ENCODE measurements at regions of chrX and their contacts with region 1.

Region 1: GRCh38 chrX:71622576-71623450 is 4.5 kb upstream of the CXCR3 start:
- DNase-seq: peak; percentile 67
- H3K4me3 ChIP-seq: no peak overlapping the region
- H3K27ac ChIP-seq: peak overlapping the region; percentile 75
- H3K4me1 ChIP-seq: peaks cover 11% of the 10 kb centered on the region
- H3K27me3 ChIP-seq: no peaks in the 10 kb centered on the region
- CTCF ChIP-seq: peak; percentile 15 to 36
- POLR2A ChIP-seq: no peak

Region 2: GRCh38 chrX:71637848-71638247 is 15.0 kb after region 1 on chrX:
- CTCF ChIA-PET with region 1: interaction called, 7 read pairs
- POLR2A ChIA-PET with region 1: no interaction called
- dilution Hi-C with region 1: no loop called
- intact Hi-C with region 1: loop called (anchors 1 kb)
- DNase-seq: peak; percentile 72
- H3K4me3 ChIP-seq: no peak overlapping the region
- H3K27ac ChIP-seq: peak overlapping the region; percentile 39
- H3K4me1 ChIP-seq: peaks cover 24% of the 10 kb centered on the region
- H3K27me3 ChIP-seq: no peaks in the 10 kb centered on the region
- CTCF ChIP-seq: no peak
- POLR2A ChIP-seq: no peak

Measured in endothelial cell of umbilical vein (primary cell).